Transverse colon (tissue), 4 donors: ENCODE measurements at regions of chr11 and their contacts with region 1.

Region 1: GRCh38 chr11:68867066-68867465 is 25.4 kb upstream of the CPT1A start:
- DNase-seq: no peak
- H3K4me3 ChIP-seq: no peak overlapping the region
- H3K27ac ChIP-seq: no peak overlapping the region
- H3K4me1 ChIP-seq: peaks cover 3 to 15% (median 5%) of the 10 kb centered on the region in 4 donors
- H3K27me3 ChIP-seq: no peaks in the 10 kb centered on the region
- CTCF ChIP-seq: no peak
- EP300 ChIP-seq: no peak
- POLR2A ChIP-seq: no peak

Region 2: DNA sequence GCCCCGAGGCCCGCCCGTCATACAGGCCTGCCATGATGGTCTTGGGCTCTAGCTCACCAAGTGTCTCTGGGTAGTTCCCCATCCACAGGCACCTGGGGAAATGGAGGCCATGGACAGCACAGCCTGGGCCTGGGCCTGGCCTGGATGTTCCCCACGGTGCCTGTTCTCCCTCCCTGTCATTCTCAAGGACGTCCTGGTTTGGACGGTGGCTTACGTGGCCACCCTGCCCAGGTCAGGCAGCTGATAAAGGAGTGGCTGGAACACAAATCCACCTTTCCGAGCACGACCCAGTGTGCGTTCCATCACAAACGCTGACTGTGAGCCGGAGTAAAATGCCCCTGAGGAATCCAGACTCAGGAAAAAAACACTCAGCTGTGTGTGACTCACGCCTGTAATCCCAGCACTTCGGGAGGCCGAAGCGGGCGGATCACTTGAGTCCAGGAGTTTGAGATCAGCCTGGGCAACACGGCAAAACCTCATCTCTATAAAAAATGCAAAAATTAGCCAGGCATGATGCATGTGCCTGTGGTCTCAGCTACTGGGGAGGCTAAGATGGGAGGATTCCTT is 74.6 kb before region 1 on chr11:
- in situ Hi-C with region 1: no loop called
- intact Hi-C with region 1: loop called (anchors 2 kb)
- DNase-seq: no peak
- H3K4me3 ChIP-seq: no peak overlapping the region
- H3K27ac ChIP-seq: no peak overlapping the region
- H3K4me1 ChIP-seq: no peaks in the 10 kb centered on the region
- H3K27me3 ChIP-seq: no peaks in the 10 kb centered on the region
- CTCF ChIP-seq: no peak
- EP300 ChIP-seq: no peak
- POLR2A ChIP-seq: no peak